Gastrocnemius medialis (tissue), 4 donors: ENCODE measurements at regions of chr4 and their contacts with region 1.

Region 1: DNA sequence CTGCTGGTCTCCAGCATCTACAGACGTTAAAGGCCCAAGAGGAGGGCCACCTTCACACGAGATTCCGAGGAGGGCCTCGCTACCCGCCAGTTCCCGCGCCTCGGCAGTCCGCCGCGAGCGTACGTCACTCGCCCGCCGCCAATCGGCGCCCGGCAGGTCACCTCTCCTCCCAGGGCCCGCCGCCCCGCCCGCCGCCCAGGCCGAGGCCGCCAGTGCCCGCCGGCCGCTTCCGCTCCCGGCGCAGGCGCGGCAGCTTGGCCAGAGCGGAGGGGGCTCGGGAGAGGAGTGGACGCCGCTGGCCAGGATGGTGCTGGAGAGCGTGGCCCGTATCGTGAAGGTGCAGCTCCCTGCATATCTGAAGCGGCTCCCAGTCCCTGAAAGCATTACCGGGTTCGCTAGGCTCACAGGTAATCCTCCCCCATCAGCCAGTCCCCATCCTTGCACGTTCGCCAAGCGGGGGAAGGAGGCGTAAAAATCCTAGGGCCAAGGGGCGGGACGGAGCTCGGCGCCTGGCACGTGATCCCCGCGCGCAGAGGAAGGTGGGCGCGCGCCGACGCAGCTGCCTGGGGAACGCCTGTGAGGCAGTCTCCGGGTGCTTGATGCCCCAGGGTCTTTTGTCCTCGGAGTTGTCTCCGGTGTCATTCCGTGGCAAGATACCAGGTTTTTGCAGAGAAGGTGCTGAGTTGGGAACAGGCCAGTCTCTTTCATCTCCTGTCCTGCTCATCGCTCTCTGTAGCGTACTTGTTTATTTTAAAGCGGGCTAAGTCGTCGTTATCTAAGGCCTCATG is at the start of gene CISD2:
- DNase-seq: peak; percentile 84 to 85
- ATAC-seq: peak; percentile 93 to 95
- H3K4me3 ChIP-seq: peak within 1 kb of the TSS; percentile 75 to 86 (median 76)
- H3K27ac ChIP-seq: peak within 1 kb of the TSS; percentile 90 to 98 (median 92)
- H3K4me1 ChIP-seq: peaks cover 10 to 15% of the 10 kb centered on the region in 2 donors
- H3K27me3 ChIP-seq: no peaks in the 10 kb centered on the region
- CTCF ChIP-seq: peak in 1 of 5 experiments; percentile 7
- POLR2A ChIP-seq: peak; percentile 62 to 80
- total RNA-seq, gene CISD2: 3.8 to 8.9 (median 5.3) TPM

Region 2: GRCh38 chr4:102500696-102501446 is 368.1 kb before region 1 on chr4 and contains the start of gene NFKB1:
- in situ Hi-C with region 1: no loop called
- intact Hi-C with region 1: loop called (anchors 2 kb)
- DNase-seq: peak; percentile 37 to 66
- ATAC-seq: peak; percentile 56 to 66
- H3K4me3 ChIP-seq: peak within 1 kb of the TSS; percentile 71 to 98 (median 88)
- H3K27ac ChIP-seq: peak within 1 kb of the TSS; percentile 97 to 99 (median 98)
- H3K4me1 ChIP-seq: peaks cover 37 to 43% of the 10 kb centered on the region in 2 donors
- H3K27me3 ChIP-seq: no peaks in the 10 kb centered on the region
- CTCF ChIP-seq: no peak
- POLR2A ChIP-seq: peak in 1 of 2 donors; percentile 50
- total RNA-seq, gene NFKB1: 20.0 to 27.2 (median 22.7) TPM

Region 3: GRCh38 chr4:102760645-102761295 is 108.2 kb before region 1 on chr4 and contains the start of gene MANBA:
- in situ Hi-C with region 1: loop called in 1 of 4 experiments (anchors 25 kb)
- intact Hi-C with region 1: loop called (anchors 2 kb)
- DNase-seq: peak; percentile 72 to 74
- ATAC-seq: peak; percentile 93 to 94
- H3K4me3 ChIP-seq: peak within 1 kb of the TSS; percentile 78 to 99 (median 83)
- H3K27ac ChIP-seq: peak within 1 kb of the TSS; percentile 83 to 89 (median 84)
- H3K4me1 ChIP-seq: peaks cover 5 to 19% of the 10 kb centered on the region in 2 donors
- H3K27me3 ChIP-seq: no peaks in the 10 kb centered on the region
- CTCF ChIP-seq: peak in 2 of 5 experiments; percentile 12 to 37
- POLR2A ChIP-seq: peak; percentile 65 to 71
- total RNA-seq, gene MANBA: 8.9 to 15.5 (median 12.6) TPM

Region 4: DNA sequence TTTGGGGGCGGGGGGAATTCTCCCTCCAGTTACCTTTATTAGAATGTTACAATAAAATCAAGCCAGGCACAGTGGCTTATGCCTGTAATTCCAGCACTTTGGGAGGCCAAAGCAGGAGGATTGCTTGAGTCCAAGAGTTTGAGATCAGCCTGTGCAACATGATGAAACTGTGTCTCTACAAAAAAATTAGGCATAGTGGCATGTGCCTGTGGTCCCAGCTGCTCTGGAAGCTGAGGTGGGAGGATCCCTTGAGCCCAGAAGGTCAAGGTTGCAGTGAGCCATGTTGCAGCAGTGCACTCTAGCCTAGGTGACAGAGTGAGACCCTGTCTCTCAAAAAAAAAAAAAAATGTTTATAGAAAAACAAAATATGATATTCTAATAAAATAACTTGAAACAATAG is 36.3 kb before region 1 on chr4:
- in situ Hi-C with region 1: loop called in 1 of 4 experiments (anchors 5 kb)
- intact Hi-C with region 1: loop called (anchors 1 kb)
- DNase-seq: no peak
- ATAC-seq: no peak
- H3K4me3 ChIP-seq: no peak overlapping the region
- H3K27ac ChIP-seq: no peak overlapping the region
- H3K4me1 ChIP-seq: peaks cover 12 to 23% of the 10 kb centered on the region in 2 donors
- H3K27me3 ChIP-seq: no peaks in the 10 kb centered on the region
- CTCF ChIP-seq: no peak
- POLR2A ChIP-seq: no peak

Region 5: DNA sequence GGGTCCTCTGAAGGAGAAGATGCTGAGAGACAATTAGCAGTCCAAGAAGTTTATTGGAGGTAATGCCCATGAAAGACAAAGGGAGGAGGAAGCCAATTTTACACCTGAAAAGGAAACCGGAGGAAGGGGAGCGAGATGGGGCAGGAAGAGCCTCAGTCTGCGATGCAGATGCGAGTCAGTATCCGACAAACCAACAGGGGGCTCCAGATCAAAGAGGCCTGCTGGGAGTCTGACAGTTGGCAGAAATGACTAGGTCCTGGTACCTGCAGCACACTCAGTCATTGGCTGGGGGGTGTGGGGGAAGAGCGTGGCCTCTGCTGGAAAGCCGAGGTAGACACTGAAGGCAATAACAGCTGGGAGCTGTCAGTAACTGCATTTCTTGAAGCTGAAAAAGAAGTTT is 560.3 kb after region 1 on chr4:
- in situ Hi-C with region 1: no loop called
- intact Hi-C with region 1: no loop called
- DNase-seq: no peak
- ATAC-seq: no peak
- H3K4me3 ChIP-seq: no peak overlapping the region
- H3K27ac ChIP-seq: no peak overlapping the region
- H3K4me1 ChIP-seq: no peaks in the 10 kb centered on the region
- H3K27me3 ChIP-seq: no peaks in the 10 kb centered on the region
- CTCF ChIP-seq: no peak
- POLR2A ChIP-seq: no peak